ENCODE measurements at regions of chr5 and their contacts with region 1.

Region 1: DNA sequence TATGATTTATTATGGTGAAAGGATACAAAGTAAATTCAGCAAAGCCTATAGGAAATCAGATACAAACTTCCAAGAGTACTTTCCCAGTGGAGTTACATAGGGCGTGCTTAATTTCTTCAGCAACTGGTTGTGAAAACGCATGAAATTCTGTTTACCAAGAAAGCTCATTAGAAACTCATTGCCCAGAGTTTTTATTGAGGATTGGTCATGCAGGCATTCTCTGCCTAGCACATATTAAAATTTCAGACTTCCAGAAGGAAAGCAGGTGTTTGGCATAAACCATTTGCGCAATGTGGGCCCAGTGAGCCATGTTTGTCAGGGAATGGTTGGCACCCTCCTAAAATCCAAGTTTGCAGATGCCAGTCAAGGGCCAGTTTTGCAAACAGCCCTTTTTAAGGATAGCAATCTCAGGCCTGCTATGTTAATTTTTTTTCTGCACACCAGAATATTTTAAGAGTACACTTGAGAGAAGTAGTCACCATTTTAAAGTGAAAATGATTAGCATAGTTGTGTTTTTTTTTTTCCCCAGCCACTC is 311.1 kb upstream of the CHD1 start:
- DNase-seq: no peak
- H3K4me3 ChIP-seq: no peak overlapping the region
- H3K27ac ChIP-seq: no peak overlapping the region
- H3K4me1 ChIP-seq: no peaks in the 10 kb centered on the region
- CTCF ChIP-seq: no peak

Region 2: GRCh38 chr5:98570661-98571191 is 669.2 kb before region 1 on chr5:
- CTCF ChIA-PET with region 1: no interaction called
- POLR2A ChIA-PET with region 1: no interaction called
- intact Hi-C with region 1: no loop called
- DNase-seq: no peak
- H3K4me3 ChIP-seq: no peak overlapping the region
- H3K27ac ChIP-seq: no peak overlapping the region
- H3K4me1 ChIP-seq: no peaks in the 10 kb centered on the region
- CTCF ChIP-seq: no peak

Region 3: GRCh38 chr5:98651715-98652114 is 588.2 kb before region 1 on chr5:
- CTCF ChIA-PET with region 1: no interaction called
- POLR2A ChIA-PET with region 1: interaction called, 10 read pairs
- intact Hi-C with region 1: no loop called
- DNase-seq: no peak
- H3K4me3 ChIP-seq: no peak overlapping the region
- H3K27ac ChIP-seq: no peak overlapping the region
- H3K4me1 ChIP-seq: no peaks in the 10 kb centered on the region
- CTCF ChIP-seq: no peak